Dorsolateral prefrontal cortex (tissue), 120 donors: ENCODE measurements at regions of chr15 and their contacts with region 1.

Region 1: DNA sequence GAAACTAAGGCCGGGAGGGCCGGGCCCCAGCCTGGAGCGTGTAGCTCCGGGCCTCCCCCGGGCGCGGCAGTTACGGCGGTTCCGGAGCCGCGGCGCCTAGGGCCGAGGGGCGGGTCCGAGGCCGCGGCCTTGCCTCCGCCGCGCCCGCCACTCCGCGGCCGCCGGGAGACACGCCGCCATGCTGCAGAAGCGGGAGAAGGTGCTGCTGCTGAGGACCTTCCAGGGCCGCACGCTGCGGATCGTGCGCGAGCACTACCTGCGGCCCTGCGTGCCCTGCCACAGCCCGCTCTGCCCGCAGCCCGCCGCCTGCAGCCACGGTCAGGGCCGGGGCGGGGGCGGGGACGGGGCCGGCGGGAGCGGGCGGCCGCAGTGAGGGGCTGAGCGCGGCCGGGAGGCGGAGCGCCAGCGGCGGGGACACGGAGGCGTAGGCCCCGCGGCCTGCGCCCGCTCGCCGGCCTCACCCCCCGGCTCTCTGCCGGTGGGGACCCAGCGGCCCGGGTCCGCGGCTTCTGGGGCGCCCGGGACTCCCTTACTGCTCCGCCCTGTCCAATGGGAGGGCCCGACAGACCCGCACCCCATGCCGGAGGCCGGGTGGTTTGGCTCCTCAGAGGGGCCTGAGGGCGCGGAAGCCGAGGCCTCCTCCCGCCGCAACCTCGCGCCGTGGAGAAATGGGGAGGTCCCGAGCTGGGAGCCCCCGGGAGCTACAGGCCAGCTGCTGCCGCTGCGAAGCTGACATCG is at the start of gene DIS3L:
- DNase-seq: peak in 9 of 10 donors; percentile 28 to 75 (median 41)
- H3K4me3 ChIP-seq: peak within 1 kb of the TSS; percentile 62 to 93 (median 80)
- H3K27ac ChIP-seq: peak within 1 kb of the TSS; percentile 70 to 97 (median 92)
- H3K27me3 ChIP-seq: no peaks in the 10 kb centered on the region
- CTCF ChIP-seq: peak in 10 of 56 donors; percentile 5 to 35 (median 10)
- total RNA-seq, gene DIS3L: 25.1 to 58.9 (median 43.1) TPM

Region 2: DNA sequence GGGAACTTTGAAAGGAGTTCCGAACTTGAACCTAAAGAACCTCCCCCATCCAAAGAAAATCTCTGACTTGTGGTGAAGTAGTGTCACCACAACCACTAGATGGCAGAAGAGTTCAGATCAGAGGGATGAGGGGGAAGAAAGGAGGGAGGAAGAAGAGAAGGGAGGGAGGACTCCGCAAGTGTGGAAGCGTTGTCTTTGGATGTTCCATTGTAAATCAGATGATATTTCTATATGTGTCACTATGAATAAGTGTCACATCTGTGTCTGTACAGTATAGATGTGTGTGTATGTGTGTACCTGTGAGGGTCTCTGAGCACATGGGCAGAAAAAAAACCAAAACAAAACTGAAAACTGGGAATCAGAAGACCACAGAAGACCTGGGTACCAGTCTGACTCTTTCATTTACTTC is 654.9 kb before region 1 on chr15:
- intact Hi-C with region 1: loop called in 1 of 2 experiments (anchors 10 kb)
- DNase-seq: peak in 2 of 10 donors; percentile 17 to 33
- H3K4me3 ChIP-seq: peak overlapping the region in 53 of 59 donors; percentile 3 to 64 (median 39)
- H3K27ac ChIP-seq: no peak overlapping the region
- H3K27me3 ChIP-seq: no peaks in the 10 kb centered on the region
- CTCF ChIP-seq: peak; percentile 76 to 93 (median 85)

Region 3: DNA sequence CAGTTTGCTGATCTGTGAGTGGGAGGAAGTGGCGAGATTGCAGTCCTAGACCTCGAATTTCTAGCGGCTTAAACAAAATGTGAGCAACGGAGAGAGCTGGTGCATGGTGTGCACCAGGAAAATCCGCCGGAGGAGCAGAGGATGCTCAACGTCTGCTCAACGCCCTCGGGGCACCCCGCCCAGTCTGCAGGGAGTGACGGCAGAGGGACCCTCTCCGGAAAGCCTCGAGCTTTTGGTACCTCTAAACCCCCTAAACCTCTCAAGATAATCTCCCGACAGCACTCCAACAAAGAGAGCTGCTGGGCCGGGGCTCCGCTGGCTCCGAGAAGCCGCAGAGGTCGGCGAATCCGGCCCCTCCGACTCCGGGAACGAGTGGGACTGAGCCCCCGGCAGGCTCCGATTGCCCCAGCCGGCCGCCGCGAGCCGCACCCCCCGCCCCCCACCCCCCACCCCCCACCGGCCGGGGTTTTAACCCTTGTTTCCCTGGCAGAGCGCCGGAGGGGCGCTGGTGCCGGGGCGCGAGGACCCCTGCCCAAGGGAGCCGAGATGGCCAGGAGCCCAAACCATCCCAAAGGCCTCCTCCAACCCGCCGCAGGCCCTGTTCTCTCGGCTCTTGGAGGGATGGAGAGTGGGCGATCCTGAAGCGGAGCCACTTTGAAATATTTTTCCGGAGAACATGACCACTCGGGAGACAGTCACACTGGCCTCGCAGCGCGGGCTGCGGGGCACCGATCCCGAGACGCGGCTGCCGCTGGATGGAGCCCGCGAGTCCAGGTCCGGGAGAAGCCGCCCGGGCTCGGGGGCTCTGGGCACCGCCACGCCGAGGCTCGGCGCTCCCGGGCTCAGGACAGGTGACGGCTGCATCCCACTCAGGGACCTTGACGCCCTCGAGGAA is 41.6 kb before region 1 on chr15:
- intact Hi-C with region 1: loop called (anchors 2 to 5 kb)
- DNase-seq: peak in 8 of 10 donors; percentile 47 to 83 (median 62)
- H3K4me3 ChIP-seq: peak overlapping the region; percentile 54 to 90 (median 67)
- H3K27ac ChIP-seq: peak overlapping the region in 2 of 59 donors; percentile 21 to 70
- H3K27me3 ChIP-seq: peaks cover 0 to 30% (median 8%) of the 10 kb centered on the region in 45 donors
- CTCF ChIP-seq: peak in 55 of 56 donors; percentile 29 to 78 (median 62)

Region 4: DNA sequence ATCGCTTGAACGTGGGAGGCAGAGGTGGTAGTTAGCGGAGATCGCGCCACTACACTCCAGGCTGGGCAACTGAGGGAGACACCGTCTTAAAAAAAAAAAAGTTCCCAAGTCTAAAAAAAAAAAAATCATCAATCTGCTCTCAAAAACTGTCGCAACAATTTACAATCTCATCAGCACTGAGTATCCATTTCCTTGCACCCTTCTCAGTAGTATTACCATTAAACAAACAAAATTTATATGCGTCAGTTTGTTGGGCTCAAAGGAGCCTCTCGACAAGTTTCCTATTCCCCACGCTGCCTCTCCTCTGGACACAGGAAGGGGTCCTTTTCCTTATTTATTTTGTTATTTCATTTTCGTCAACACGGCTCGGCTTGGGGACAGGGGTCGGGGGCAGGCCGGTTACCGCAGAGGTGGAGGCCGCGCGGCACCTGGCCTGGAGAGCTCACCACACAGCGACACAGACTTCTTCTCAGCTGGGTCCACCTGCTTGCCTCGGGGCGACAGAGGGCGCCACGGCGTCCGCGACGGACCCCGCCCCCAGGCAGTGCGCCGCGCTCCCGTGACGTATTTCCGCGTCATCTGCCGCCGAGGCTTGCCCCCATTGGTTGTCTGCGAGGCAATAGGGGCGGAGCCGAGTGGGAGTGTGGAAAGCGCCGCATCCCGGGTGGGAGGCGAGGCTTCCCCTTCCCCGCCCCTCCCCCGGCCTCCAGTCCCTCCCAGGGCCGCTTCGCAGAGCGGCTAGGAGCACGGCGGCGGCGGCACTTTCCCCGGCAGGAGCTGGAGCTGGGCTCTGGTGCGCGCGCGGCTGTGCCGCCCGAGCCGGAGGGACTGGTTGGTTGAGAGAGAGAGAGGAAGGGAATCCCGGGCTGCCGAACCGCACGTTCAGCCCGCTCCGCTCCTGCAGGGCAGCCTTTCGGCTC is 92.9 kb after region 1 on chr15 and contains the start of gene MAP2K1:
- intact Hi-C with region 1: loop called in 1 of 2 experiments (anchors 2 kb)
- DNase-seq: peak; percentile 95 to 99 (median 96)
- H3K4me3 ChIP-seq: peak within 1 kb of the TSS; percentile 61 to 99 (median 89)
- H3K27ac ChIP-seq: peak within 1 kb of the TSS in 58 of 59 donors; percentile 44 to 95 (median 87)
- H3K27me3 ChIP-seq: no peaks in the 10 kb centered on the region
- CTCF ChIP-seq: peak; percentile 78 to 98 (median 94)
- total RNA-seq, gene MAP2K1: 67.2 to 209 (median 137) TPM

Region 5: DNA sequence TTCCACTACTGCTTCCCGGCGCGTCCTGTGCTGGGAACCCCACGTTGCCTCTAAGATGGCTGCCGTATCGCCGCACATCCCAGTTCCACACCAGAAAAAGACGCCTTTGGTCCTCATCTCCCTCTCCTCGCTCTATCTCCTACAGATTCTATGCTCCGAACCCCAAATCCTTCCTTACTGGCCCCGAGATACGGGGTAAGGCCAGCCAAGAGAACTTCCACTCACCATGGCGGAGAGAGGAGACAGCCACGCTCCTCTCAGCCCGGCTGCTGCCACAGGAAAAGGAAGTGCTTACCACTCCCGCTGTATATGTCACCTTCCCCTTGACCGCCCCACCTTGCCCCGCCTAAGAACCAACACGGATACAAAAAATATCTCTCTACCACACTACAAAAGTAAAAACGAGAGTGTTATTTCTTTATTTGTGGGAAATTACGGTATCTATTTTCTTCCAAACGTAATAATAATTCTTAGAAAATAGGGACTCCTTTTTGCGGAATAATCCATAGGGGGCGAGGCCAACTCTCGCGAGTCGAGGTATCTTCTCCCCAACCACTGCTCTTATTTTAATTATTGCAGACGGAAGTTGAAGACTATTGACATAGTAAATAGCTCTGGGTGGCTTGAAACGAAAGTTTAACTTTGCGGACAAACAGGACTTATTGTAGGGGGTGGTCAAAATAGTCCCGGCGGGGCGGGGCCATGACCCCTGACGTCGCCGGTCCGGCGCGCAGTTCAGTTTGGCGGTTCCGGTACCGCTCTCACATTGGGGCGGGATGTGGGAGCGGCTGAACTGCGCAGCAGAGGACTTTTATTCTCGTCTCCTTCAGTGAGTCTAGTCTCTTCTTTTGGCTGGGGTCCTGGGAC is 211.2 kb after region 1 on chr15 and contains the starts of genes RPL4 and ZWILCH:
- intact Hi-C with region 1: loop called (anchors 5 to 10 kb)
- DNase-seq: peak; percentile 67 to 83 (median 74)
- H3K4me3 ChIP-seq: peak within 1 kb of the TSS; percentile 62 to 100 (median 92)
- H3K27ac ChIP-seq: peak within 1 kb of the TSS; percentile 6 to 98 (median 95)
- H3K27me3 ChIP-seq: no peaks in the 10 kb centered on the region
- CTCF ChIP-seq: peak in 35 of 56 donors; percentile 4 to 54 (median 27)
- total RNA-seq, gene RPL4: 527 to 1,058 (median 732) TPM
- total RNA-seq, gene ZWILCH: 3.0 to 12.5 (median 6.8) TPM